Dendritic cell treated with granulocyte-macrophage colony-stimulating factor and Interleukin-4, amounts not matched to agents 40 ng/mL and 50 ng/mL, for 4 days (primary cell): ENCODE measurements at regions of chr3 and their contacts with region 1.

Region 1: DNA sequence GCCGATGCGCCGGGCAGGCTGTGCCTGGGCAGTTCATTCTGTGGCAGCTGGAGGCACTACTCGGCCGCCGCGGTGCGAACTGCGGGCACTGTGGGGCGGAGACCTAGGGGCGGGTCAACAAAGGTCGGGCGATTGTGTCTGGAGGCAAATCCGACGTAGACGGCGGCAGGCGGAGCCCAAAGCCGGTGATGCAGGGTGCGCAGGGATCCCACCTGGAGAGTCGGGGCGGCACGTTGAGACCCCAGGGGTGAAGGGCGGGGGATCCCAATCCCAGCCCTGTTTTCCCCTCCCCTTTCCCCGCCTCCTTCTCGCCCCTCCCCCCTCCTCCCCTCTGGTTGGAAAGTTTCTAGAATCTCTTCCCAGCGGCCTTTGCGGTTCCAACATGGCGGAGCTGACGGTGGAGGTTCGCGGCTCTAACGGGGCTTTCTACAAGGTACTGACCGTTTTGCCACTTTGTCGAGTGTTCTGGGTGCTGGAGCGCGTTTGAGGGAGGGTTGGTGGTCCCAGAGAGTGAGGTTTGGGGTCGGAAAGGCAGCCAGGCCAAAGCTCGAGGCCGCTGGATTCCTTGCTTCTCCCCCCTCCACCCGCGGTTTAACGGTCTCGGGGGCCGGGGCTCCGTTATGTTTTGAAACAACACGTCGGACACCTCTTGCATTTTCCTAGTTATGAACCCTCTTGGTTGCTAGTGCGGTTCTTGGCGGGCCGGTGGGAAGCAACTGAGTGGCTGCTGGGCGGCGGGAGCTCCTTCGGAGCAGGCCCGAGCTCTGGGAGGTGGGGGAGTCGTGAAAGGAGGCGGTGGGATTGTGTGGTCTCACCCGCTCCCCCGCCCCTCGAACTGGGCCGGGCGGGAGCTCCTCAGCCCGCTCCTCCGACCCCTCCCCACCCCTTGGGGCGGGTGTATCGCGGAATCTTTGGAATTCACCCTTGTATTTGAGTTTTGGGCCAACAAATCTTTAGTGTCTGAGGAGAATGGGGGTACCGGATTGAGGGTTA is at the start of gene FXR1:
- H3K4me3 Mint-ChIP-seq: peak within 1 kb of the TSS; percentile 92
- H3K27ac Mint-ChIP-seq: peak within 1 kb of the TSS; percentile 94
- H3K4me1 Mint-ChIP-seq: peaks cover 38% of the 10 kb centered on the region
- H3K27me3 Mint-ChIP-seq: no peaks in the 10 kb centered on the region

Region 2: DNA sequence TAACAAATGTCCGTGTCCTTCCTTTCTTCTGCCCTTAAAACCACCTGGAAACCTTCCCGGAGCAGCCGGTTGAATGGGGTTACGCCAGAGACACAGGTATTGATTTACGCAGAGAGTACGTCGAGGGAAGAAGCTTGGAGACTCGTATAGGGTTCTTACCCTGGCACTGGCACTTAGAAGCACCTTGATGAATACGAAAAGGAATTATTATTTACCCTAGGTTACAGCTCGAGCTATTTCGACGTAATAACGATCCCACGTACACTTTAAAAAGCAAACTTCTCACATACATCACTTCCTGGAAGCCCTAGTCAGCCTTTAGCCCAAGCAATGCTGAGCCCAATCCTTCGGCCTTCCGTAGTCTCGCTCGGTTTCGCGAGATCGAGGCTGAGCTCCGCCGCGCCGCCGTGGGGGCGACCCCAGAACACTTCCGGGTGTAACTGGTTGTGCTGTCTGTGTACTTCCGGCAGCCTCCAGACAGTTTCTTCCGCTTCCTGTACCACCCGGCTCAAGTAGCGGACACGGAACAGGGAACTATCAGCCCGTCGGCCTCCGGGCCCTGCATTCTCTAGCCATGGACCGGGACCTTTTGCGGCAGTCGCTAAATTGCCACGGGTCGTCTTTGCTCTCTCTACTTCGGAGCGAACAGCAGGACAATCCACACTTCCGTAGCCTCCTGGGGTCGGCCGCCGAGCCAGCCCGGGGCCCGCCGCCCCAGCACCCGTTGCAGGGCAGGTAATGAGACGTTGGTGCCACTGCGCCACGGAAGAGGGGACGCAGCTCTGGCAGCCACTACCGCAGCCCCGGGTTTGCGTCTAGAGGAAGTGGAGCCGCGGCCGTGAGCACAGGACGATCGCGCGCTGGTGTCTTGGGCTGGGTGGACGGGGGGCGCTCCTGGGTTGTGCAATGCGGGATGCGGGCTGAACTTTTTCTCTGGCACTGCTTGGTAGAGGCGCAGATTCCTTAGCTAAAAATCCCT is 310.6 kb before region 1 on chr3 and contains the start of gene TTC14:
- intact Hi-C with region 1: loop called (anchors 5 kb)
- H3K4me3 Mint-ChIP-seq: peak within 1 kb of the TSS; percentile 85
- H3K27ac Mint-ChIP-seq: peak within 1 kb of the TSS; percentile 92
- H3K4me1 Mint-ChIP-seq: peaks cover 12% of the 10 kb centered on the region
- H3K27me3 Mint-ChIP-seq: peaks cover 24% of the 10 kb centered on the region

Region 3: GRCh38 chr3:180989291-180990163 is 76.9 kb after region 1 on chr3 and contains the start of gene DNAJC19:
- intact Hi-C with region 1: loop called (anchors 1 kb)
- H3K4me3 Mint-ChIP-seq: peak within 1 kb of the TSS; percentile 98
- H3K27ac Mint-ChIP-seq: peak within 1 kb of the TSS; percentile 95
- H3K4me1 Mint-ChIP-seq: peaks cover 15% of the 10 kb centered on the region
- H3K27me3 Mint-ChIP-seq: peaks cover 14% of the 10 kb centered on the region